HepG2 (cell line): ENCODE measurements at regions of chr10 and their contacts with region 1.

Region 1: GRCh38 chr10:11713186-11713743 is 28.9 kb upstream of the ECHDC3 start:
- DNase-seq: no peak
- ATAC-seq: no peak
- H3K4me3 ChIP-seq: no peak overlapping the region
- H3K27ac ChIP-seq: no peak overlapping the region
- H3K4me1 ChIP-seq: peaks cover 84% of the 10 kb centered on the region
- H3K27me3 ChIP-seq: no peaks in the 10 kb centered on the region
- CTCF ChIP-seq: no peak
- EP300 ChIP-seq: no peak
- POLR2A ChIP-seq: no peak
- RAD21 ChIP-seq: no peak

Region 2: DNA sequence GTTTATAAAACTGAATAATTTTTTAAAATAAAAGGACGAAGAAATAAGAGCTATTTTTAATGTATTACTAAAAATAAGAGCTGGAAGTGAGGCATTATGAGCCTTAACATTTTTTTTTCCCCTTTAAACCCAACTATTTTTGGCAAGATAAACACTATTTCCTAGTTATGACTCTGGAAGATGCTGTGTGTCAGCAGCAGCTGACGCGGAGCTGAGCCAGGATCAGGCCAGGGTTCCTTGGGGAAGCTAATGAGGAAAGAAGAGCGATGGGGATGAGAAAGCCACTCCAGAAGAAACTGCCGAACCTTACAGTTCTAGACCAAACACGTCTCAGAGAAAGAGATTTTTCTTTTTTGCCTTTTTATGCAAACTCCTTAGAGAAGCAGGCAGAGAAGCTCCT is 187.8 kb before region 1 on chr10:
- CTCF ChIA-PET with region 1: no interaction called
- POLR2A ChIA-PET with region 1: interaction called, 10 read pairs
- in situ Hi-C with region 1: no loop called
- intact Hi-C with region 1: no loop called
- DNase-seq: no peak
- ATAC-seq: no peak
- H3K4me3 ChIP-seq: no peak overlapping the region
- H3K27ac ChIP-seq: no peak overlapping the region
- H3K4me1 ChIP-seq: peaks cover 49% of the 10 kb centered on the region
- H3K27me3 ChIP-seq: no peaks in the 10 kb centered on the region
- CTCF ChIP-seq: no peak
- EP300 ChIP-seq: no peak
- POLR2A ChIP-seq: no peak
- RAD21 ChIP-seq: no peak

Region 3: GRCh38 chr10:11602919-11603523 is 110.2 kb before region 1 on chr10:
- CTCF ChIA-PET with region 1: no interaction called
- POLR2A ChIA-PET with region 1: interaction called, 17 read pairs
- in situ Hi-C with region 1: no loop called
- intact Hi-C with region 1: loop called (anchors 2 kb)
- DNase-seq: peak; percentile 91
- ATAC-seq: peak; percentile 76
- H3K4me3 ChIP-seq: peak overlapping the region; percentile 2 to 36 (median 20); a peak in 3 of 6 replicates
- H3K27ac ChIP-seq: peak overlapping the region; percentile 72
- H3K4me1 ChIP-seq: peaks cover 92% of the 10 kb centered on the region
- H3K27me3 ChIP-seq: no peaks in the 10 kb centered on the region
- CTCF ChIP-seq: no peak
- EP300 ChIP-seq: peak; percentile 29 to 90; a peak in 3 of 4 replicates
- POLR2A ChIP-seq: no peak
- RAD21 ChIP-seq: no peak

Region 4: GRCh38 chr10:11611248-11612020 is 101.8 kb before region 1 on chr10 and contains the start of gene USP6NL:
- CTCF ChIA-PET with region 1: no interaction called
- POLR2A ChIA-PET with region 1: interaction called, 17 read pairs
- in situ Hi-C with region 1: no loop called
- intact Hi-C with region 1: no loop called
- DNase-seq: peak; percentile 70
- ATAC-seq: peak; percentile 88
- H3K4me3 ChIP-seq: peak within 1 kb of the TSS; percentile 90 to 96 (median 92)
- H3K27ac ChIP-seq: peak within 1 kb of the TSS; percentile 82
- H3K4me1 ChIP-seq: peaks cover 67% of the 10 kb centered on the region
- H3K27me3 ChIP-seq: no peaks in the 10 kb centered on the region; a peak in 1 of 5 replicates
- CTCF ChIP-seq: no peak
- EP300 ChIP-seq: no peak
- POLR2A ChIP-seq: peak; percentile 43 to 69
- RAD21 ChIP-seq: no peak; the same call in 1 of the 2 replicates
- total RNA-seq, gene USP6NL: 22.9 and 26.2 TPM in 2 replicates

Region 5: DNA sequence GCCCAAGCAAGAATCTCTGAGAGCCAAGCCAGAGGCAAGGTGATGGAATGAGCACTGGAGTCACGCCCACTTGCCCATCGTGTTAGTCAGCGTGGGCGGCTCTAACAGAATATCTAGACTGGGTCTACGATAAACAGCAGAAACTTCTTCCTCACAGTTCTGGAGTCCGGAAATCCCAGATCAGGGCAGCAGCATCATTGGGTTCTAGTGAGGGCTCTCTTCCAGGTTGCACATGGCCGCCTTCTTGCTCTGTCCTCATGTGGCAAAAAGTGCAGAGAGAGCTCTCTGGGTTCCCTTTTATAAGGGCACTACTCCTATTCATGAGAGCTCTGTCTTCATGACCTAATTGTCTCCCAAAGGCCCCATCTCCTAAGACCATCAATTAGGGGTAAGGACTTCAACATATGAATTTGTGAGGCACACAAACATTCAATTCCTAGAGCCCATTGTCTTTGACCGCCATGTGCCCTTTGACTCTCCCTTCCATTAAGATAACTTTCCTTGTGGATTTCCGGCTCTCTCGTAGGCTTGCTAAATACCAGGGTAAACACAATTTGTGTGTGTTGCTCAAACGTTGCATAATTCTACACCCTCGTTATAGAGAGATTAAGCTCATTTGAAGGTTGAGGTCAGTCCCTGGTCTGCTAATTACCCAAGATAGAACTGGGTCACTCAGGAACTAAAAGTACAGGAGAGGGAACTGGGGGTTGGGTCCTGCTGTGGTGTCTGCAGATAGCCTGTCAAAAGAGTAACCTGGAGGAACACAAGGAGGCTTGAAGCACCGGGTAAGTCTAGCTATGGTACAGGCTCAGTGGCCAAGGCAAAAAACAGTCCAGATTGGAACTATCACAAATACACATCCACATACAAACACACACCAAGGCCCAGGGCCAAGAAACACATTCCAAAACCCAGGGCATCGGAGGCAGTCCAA is 73.2 kb before region 1 on chr10:
- CTCF ChIA-PET with region 1: no interaction called
- POLR2A ChIA-PET with region 1: interaction called, 19 read pairs
- in situ Hi-C with region 1: no loop called
- intact Hi-C with region 1: no loop called
- DNase-seq: peak; percentile 96
- ATAC-seq: peak; percentile 92
- H3K4me3 ChIP-seq: peak overlapping the region in 1 of 3 experiments; percentile 22; a peak in 1 of 6 replicates
- H3K27ac ChIP-seq: no peak overlapping the region
- H3K4me1 ChIP-seq: peaks cover 18% of the 10 kb centered on the region
- H3K27me3 ChIP-seq: peaks cover 2 to 16% of the 10 kb centered on the region in 2 experiments; a peak in 3 of 5 replicates
- CTCF ChIP-seq: no peak
- EP300 ChIP-seq: peak; percentile 80 to 98
- POLR2A ChIP-seq: no peak
- RAD21 ChIP-seq: no peak

Region 6: GRCh38 chr10:11698691-11699549 is 14.3 kb before region 1 on chr10:
- CTCF ChIA-PET with region 1: interaction called, 3 read pairs
- POLR2A ChIA-PET with region 1: interaction called, 113 read pairs
- in situ Hi-C with region 1: no loop called
- intact Hi-C with region 1: loop called (anchors 1 kb)
- DNase-seq: peak; percentile 61
- ATAC-seq: peak; percentile 60
- H3K4me3 ChIP-seq: peak overlapping the region; percentile 2 to 34 (median 33); a peak in 4 of 6 replicates
- H3K27ac ChIP-seq: peak overlapping the region; percentile 83
- H3K4me1 ChIP-seq: peaks cover 72% of the 10 kb centered on the region
- H3K27me3 ChIP-seq: no peaks in the 10 kb centered on the region
- CTCF ChIP-seq: no peak
- EP300 ChIP-seq: peak in 1 of 2 experiments; percentile 68; a peak in 2 of 4 replicates
- POLR2A ChIP-seq: no peak
- RAD21 ChIP-seq: no peak